AG04450 (cell line): ENCODE measurements at regions of chr9 and their contacts with region 1.

Region 1: GRCh38 chr9:120916588-120916987 is 10.0 kb downstream of the TRAF1 start:
- DNase-seq: no peak
- H3K4me3 ChIP-seq: no peak overlapping the region
- H3K27ac ChIP-seq: no peak overlapping the region
- H3K27me3 ChIP-seq: peaks cover 2% of the 10 kb centered on the region
- CTCF ChIP-seq: 0 out of 2 replicates have a peak, but pooled peaks have one; percentile 18

Region 2: DNA sequence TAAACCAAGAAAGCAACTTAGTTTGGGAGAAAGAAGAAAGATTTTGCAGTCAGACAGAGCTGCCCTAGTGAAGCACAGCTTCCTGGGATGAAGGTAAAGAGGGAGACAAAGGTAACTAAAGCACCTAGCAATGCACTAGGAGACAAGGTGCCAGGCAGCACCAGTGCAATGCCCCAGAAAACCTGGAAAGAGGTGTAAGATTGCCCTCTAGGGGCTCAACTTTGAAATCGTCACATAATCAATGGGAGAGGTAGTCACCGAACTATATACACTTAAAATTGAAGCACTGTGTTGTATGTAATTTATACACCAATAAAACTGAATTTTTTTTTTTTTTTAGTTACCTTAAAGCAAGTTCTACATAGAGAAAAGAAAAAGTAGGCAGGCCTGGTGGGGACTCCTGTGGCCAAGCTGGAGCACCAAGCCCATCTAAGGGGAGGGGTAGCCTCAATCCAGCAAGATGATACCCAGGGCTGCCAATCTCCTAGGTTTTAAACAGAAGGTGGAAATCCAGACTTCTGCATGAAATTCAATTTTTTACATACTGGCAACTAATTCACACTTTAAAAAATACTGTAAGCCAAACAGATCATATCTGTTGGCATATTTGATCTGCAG is 384.8 kb before region 1 on chr9:
- CTCF ChIA-PET with region 1: interaction called, 12 read pairs
- POLR2A ChIA-PET with region 1: no interaction called
- DNase-seq: no peak
- H3K4me3 ChIP-seq: no peak overlapping the region
- H3K27ac ChIP-seq: no peak overlapping the region
- H3K27me3 ChIP-seq: no peaks in the 10 kb centered on the region
- CTCF ChIP-seq: peak; percentile 59